MCF 10A (cell line): ENCODE measurements at regions of chr15 and their contacts with region 1.

Region 1: GRCh38 chr15:74615508-74616365 is at the start of gene CLK3:
- DNase-seq: peak; percentile 92
- H3K4me3 Mint-ChIP-seq: peak within 1 kb of the TSS; percentile 84
- H3K27ac Mint-ChIP-seq: peak within 1 kb of the TSS; percentile 95
- H3K4me1 Mint-ChIP-seq: peaks cover 31% of the 10 kb centered on the region
- H3K27me3 Mint-ChIP-seq: peaks cover 7% of the 10 kb centered on the region
- CTCF ChIP-seq: no peak
- total RNA-seq, gene CLK3: 57.8 and 62.8 TPM in 2 replicates

Region 2: DNA sequence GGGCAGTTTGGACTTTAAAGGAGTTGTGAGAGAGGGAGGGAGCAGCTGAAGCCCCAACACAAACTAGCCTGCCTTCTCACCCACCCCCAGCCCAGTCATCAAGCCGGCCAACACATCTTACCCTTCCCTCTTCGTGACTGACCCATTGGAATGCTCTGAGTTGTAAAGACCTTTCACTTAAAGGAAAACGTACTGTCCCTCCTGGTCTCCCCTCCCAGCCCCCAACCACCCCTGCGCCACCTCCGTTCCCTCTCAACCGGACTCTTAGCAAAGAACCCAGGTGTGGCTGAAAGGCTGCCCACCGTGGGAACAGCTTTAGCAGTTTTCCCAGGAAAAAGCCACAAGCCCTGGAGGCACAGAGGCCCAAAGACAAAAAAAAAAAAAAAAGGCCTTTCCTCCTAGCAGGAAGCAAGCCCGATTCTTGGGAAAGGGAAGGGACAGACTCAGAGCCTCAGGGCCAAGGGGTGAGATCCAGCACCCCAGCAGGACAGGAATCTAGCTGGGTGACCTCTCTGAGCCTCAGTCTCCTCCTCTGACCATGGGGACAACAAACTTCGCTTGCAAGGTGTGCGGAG is 250.7 kb before region 1 on chr15:
- CTCF ChIA-PET with region 1: no interaction called
- POLR2A ChIA-PET with region 1: no interaction called
- intact Hi-C with region 1: no loop called
- DNase-seq: no peak
- H3K4me3 Mint-ChIP-seq: no peak overlapping the region
- H3K27ac Mint-ChIP-seq: no peak overlapping the region
- H3K4me1 Mint-ChIP-seq: no peaks in the 10 kb centered on the region
- H3K27me3 Mint-ChIP-seq: peaks cover 4% of the 10 kb centered on the region
- CTCF ChIP-seq: no peak

Region 3: GRCh38 chr15:74420197-74420898 is 195.4 kb before region 1 on chr15:
- CTCF ChIA-PET with region 1: no interaction called
- POLR2A ChIA-PET with region 1: no interaction called
- intact Hi-C with region 1: no loop called
- DNase-seq: no peak
- H3K4me3 Mint-ChIP-seq: no peak overlapping the region
- H3K27ac Mint-ChIP-seq: no peak overlapping the region
- H3K4me1 Mint-ChIP-seq: peaks cover 26% of the 10 kb centered on the region
- H3K27me3 Mint-ChIP-seq: no peaks in the 10 kb centered on the region
- CTCF ChIP-seq: no peak

Region 4: DNA sequence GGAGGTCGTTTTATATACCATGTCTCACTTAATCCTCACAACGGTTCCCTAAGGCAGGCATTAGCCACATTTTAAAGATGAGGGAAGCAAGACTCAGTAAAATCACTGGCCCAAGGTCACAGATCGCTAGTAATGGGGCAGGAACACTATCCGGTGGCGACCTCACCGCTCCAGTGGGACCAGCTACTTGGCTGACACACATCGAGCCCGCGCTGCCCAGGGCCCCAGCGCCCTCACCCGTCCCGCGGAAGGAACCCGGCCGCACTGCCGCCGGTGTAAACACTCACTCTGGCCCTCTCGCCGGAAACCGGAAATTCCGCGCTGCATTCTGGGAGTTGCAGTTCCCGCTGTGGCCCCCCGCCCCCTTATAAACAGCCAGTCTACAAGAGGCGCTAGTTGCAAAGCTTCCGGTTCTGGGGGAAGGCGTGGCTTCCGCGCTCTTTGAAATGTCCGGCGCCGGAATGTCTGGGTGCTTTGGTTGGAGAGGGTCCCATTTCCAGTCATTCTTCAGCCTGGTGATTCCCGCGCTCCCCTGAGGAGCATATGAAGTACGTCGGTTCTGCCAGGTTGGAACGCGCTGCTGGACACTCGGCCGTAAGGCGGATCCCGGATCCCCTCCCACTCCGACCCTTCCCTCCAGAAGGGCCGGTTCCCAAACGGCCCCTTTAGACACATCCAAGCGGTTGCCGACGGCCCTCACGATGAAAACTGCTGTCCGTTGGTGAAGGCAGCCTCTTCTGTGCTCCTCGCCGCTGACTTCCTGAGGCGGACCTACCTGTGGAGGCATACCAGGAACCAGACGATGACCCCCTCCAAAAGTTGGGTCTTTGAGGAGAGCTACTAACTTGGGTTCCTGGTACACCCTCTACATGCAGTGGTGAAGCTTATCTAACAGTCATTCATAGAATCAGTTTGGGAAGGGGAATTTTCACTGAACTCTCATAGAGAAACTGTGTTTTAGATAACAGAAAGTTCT is 154.6 kb before region 1 on chr15 and contains the start of gene UBL7:
- CTCF ChIA-PET with region 1: no interaction called
- POLR2A ChIA-PET with region 1: interaction called, 39 read pairs
- intact Hi-C with region 1: loop called (anchors 10 kb)
- DNase-seq: peak; percentile 97
- H3K4me3 Mint-ChIP-seq: peak within 1 kb of the TSS; percentile 93
- H3K27ac Mint-ChIP-seq: peak within 1 kb of the TSS; percentile 70
- H3K4me1 Mint-ChIP-seq: peaks cover 30% of the 10 kb centered on the region
- H3K27me3 Mint-ChIP-seq: no peaks in the 10 kb centered on the region
- CTCF ChIP-seq: no peak
- total RNA-seq, gene UBL7: 55.5 and 56.4 TPM in 2 replicates

Region 5: GRCh38 chr15:74545880-74546656 is 69.7 kb before region 1 on chr15:
- CTCF ChIA-PET with region 1: interaction called, 5 read pairs
- POLR2A ChIA-PET with region 1: interaction called, 71 read pairs
- intact Hi-C with region 1: loop called (anchors 2 kb)
- DNase-seq: peak; percentile 99
- H3K4me3 Mint-ChIP-seq: no peak overlapping the region
- H3K27ac Mint-ChIP-seq: no peak overlapping the region
- H3K4me1 Mint-ChIP-seq: peaks cover 34% of the 10 kb centered on the region
- H3K27me3 Mint-ChIP-seq: peaks cover 38% of the 10 kb centered on the region
- CTCF ChIP-seq: no peak

Region 6: DNA sequence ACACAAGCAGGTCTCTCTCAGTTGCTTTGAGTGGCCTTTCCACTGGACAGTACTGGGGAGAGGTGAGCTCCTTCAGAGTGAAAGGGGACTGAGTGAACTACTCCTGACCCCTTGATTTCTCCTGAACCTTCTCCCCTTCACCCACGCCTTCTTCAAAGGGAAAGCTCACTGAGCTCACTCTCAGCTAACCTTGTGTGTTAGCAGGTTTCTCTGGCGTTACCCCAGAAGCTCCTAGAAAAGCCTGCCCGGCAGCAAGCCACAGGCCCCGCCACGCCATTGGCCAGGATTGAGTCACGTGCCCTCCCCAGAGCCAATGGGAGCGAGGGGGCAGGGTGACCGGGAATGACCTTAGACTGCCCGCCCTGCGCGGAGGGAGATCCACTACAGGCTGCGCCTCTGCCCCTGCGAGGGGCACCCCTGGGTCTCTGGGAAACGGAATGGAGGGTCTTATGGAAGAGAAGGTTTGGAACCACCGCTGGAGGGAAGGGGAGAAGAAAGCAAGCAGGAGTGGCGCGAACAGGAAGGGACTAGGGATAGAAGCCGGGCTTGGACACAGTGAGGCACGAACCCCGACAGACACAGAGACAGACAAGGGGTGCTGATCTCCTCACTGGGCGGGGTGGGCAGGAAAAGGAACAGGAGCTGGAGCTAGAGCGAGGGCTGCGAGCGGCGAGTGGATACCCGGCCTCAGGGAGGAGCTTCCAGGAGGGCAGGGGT is 17.5 kb before region 1 on chr15:
- CTCF ChIA-PET with region 1: interaction called, 3 read pairs
- POLR2A ChIA-PET with region 1: interaction called, 21 read pairs
- intact Hi-C with region 1: no loop called
- DNase-seq: peak; percentile 92
- H3K4me3 Mint-ChIP-seq: peak overlapping the region; percentile 80
- H3K27ac Mint-ChIP-seq: peak overlapping the region; percentile 88
- H3K4me1 Mint-ChIP-seq: peaks cover 9% of the 10 kb centered on the region
- H3K27me3 Mint-ChIP-seq: no peaks in the 10 kb centered on the region
- CTCF ChIP-seq: no peak

Region 7: DNA sequence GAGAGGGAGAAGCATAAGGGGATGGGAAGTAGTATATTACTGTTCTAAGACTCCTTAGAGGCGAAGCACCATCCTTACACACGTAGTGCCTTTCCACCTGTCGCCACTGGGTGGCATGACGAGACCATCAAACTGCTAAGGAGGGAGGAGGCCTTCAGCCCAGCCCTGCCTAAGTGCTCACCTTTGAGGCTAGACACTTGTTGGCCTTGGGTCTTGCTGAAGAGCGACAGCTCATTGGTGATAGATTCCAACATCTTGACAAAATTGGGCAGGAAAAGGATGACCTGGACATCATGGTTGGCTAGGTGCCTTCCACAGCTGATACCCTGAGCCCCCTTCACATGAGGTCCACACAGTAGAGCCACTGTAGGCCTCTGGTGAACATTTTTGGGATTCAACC is 19.5 kb after region 1 on chr15:
- CTCF ChIA-PET with region 1: interaction called, 90 read pairs
- POLR2A ChIA-PET with region 1: interaction called, 3 read pairs
- intact Hi-C with region 1: no loop called
- DNase-seq: peak; percentile 81
- H3K4me3 Mint-ChIP-seq: no peak overlapping the region
- H3K27ac Mint-ChIP-seq: no peak overlapping the region
- H3K4me1 Mint-ChIP-seq: no peaks in the 10 kb centered on the region
- H3K27me3 Mint-ChIP-seq: no peaks in the 10 kb centered on the region
- CTCF ChIP-seq: peak; percentile 89